ENCODE measurements at regions of chr2 and their contacts with region 1.

Region 1: DNA sequence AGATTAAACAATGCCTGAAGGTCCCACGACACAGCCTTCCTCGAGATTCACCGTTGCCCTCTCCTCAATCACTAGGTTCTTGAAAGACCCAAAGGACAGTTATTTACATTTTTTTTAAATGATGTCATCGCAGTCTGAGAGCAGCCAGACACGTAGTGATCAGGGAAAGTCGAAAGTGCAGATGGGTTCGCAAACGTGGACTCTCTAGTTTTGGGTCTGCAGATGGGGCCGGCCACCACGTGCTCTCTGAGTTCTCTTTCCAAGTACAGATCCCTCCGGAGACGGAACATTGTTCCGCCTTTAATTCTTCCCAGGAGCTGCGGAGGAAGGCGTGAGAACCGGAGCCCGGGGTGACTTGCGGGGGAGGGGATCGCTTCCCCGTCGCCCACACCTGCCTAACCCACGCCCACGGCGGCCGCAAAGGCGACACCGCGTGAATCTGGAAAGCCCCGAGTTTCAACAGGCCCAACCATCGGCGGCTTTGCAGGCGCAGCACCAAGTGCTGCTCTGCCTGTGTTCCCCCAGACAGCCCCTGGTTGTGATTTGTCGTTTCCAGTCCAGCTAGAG is 54.3 kb downstream of the PKDCC start:
- DNase-seq: peak; percentile 86
- H3K4me3 Mint-ChIP-seq: peak overlapping the region; percentile 70
- H3K27ac Mint-ChIP-seq: peak overlapping the region; percentile 88
- H3K4me1 Mint-ChIP-seq: peaks cover 55% of the 10 kb centered on the region
- H3K27me3 Mint-ChIP-seq: no peaks in the 10 kb centered on the region

Region 2: DNA sequence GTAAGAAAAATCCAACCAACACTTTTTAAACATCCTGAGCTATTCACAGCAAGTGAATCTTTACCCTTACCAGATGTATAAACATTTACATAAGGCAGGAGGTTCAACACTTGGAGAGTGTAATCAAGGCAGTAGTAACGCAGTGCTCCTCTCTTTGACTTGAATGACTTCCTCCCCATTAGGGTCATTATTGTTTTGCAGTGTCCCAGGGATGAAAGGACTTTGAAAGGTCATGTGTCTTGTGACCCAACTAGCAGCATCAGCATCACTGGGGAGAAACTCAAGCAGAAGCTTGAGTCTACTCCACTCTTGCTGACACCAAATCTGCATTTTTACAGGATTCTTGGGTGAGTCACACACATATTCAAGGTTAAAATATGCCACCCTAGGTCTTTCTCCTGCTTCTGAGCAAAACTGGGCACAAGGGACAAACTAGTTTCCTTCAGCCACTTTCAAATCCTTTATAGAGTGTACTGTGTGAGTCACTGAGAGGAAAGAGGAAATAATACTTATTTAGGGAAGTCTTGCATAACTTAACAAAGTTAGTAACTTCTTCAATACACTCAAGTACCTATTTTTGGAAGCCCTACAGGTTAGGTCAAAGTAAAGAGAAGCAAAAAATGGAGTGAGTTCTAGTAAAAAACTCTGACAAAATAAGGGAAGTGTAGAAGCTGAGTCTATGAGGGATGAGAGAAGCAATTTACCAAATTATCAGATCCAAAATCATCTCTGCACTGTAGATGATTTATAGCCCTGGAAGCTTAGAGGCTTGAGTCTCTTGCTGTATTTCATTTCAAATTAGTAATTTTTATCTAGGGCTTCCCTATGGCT is 16.0 kb after region 1 on chr2:
- CTCF ChIA-PET with region 1: interaction called, 4 read pairs
- intact Hi-C with region 1: loop called (anchors 1 kb)
- DNase-seq: no peak
- H3K4me3 Mint-ChIP-seq: no peak overlapping the region
- H3K27ac Mint-ChIP-seq: peak overlapping the region; percentile 63
- H3K4me1 Mint-ChIP-seq: peaks cover 49% of the 10 kb centered on the region
- H3K27me3 Mint-ChIP-seq: no peaks in the 10 kb centered on the region

Region 3: GRCh38 chr2:42132966-42133641 is 31.0 kb after region 1 on chr2:
- CTCF ChIA-PET with region 1: interaction called, 12 read pairs
- intact Hi-C with region 1: loop called (anchors 1 kb)
- DNase-seq: peak; percentile 91
- H3K4me3 Mint-ChIP-seq: peak overlapping the region; percentile 72
- H3K27ac Mint-ChIP-seq: peak overlapping the region; percentile 89
- H3K4me1 Mint-ChIP-seq: peaks cover 83% of the 10 kb centered on the region
- H3K27me3 Mint-ChIP-seq: no peaks in the 10 kb centered on the region

Region 4: GRCh38 chr2:42652086-42652485 is 550.0 kb after region 1 on chr2:
- CTCF ChIA-PET with region 1: no interaction called
- intact Hi-C with region 1: loop called (anchors 5 kb)
- DNase-seq: peak; percentile 56
- H3K4me3 Mint-ChIP-seq: peak overlapping the region; percentile 54
- H3K27ac Mint-ChIP-seq: peak overlapping the region; percentile 83
- H3K4me1 Mint-ChIP-seq: peaks cover 70% of the 10 kb centered on the region
- H3K27me3 Mint-ChIP-seq: no peaks in the 10 kb centered on the region

Region 5: DNA sequence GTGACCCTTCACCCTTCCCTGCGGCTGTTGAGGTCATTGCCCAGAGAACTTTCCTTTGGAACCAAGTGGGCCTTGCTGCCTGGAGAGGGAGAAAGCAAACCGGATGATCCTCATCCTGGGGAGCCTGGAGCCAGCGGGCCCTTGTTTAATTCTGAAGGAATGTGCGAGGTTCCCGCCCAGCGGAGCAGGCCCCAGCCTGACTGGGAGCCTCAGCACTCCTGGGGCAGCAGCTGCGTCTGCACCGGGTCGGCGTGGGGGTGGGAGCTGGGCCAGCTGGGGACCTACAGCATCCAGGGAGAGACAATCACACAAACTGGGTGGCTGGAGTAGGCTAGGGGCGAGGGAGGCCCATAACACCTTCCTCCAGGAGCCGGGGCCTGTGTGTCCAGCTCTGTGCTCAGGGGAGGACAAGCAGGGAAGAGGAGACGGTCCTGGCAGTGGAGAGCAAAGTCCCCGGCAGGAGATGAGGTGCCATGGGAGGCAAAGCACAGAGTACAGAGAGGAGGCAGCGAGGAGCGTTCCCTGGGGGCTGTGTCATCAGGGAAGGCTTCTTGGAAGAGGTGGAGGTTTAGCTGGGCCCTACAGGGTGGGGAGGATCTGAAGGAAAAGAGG is 752.2 kb after region 1 on chr2:
- CTCF ChIA-PET with region 1: no interaction called
- intact Hi-C with region 1: no loop called
- DNase-seq: no peak
- H3K4me3 Mint-ChIP-seq: no peak overlapping the region
- H3K27ac Mint-ChIP-seq: no peak overlapping the region
- H3K4me1 Mint-ChIP-seq: peaks cover 12% of the 10 kb centered on the region
- H3K27me3 Mint-ChIP-seq: no peaks in the 10 kb centered on the region

Measured in activated naive CD4-positive, alpha-beta T cell treated with anti-CD3 and anti-CD28 coated beads for 36 hours (primary cell).